ENCODE measurements at regions of chr1 and their contacts with region 1.

Region 1: GRCh38 chr1:177913762-177914540 is 55.9 kb downstream of the SEC16B start:
- DNase-seq: peak; percentile 49
- H3K4me3 Mint-ChIP-seq: no peak overlapping the region
- H3K27ac Mint-ChIP-seq: no peak overlapping the region
- H3K4me1 Mint-ChIP-seq: no peaks in the 10 kb centered on the region
- H3K27me3 Mint-ChIP-seq: peaks cover 32% of the 10 kb centered on the region
- CTCF ChIP-seq: peak; percentile 44

Region 2: GRCh38 chr1:177794376-177794991 is 119.5 kb before region 1 on chr1:
- CTCF ChIA-PET with region 1: no interaction called
- intact Hi-C with region 1: loop called (anchors 10 kb)
- DNase-seq: no peak
- H3K4me3 Mint-ChIP-seq: no peak overlapping the region
- H3K27ac Mint-ChIP-seq: no peak overlapping the region
- H3K4me1 Mint-ChIP-seq: no peaks in the 10 kb centered on the region
- H3K27me3 Mint-ChIP-seq: peaks cover 85% of the 10 kb centered on the region
- CTCF ChIP-seq: no peak

Measured in Calu3 (cell line).